HepG2 (cell line): ENCODE measurements at regions of chr6 and their contacts with region 1.

Region 1: GRCh38 chr6:106300944-106301343 is 24.6 kb downstream of the ATG5 start:
- DNase-seq: peak; percentile 14
- ATAC-seq: peak; percentile 47; the same call in 2 of the 3 replicates
- H3K4me3 ChIP-seq: no peak overlapping the region
- H3K27ac ChIP-seq: no peak overlapping the region
- H3K4me1 ChIP-seq: peaks cover 12% of the 10 kb centered on the region
- H3K27me3 ChIP-seq: no peaks in the 10 kb centered on the region
- CTCF ChIP-seq: peak; percentile 63
- EP300 ChIP-seq: no peak
- POLR2A ChIP-seq: no peak
- RAD21 ChIP-seq: 0 out of 2 replicates have a peak, but pooled peaks have one; percentile 14

Region 2: DNA sequence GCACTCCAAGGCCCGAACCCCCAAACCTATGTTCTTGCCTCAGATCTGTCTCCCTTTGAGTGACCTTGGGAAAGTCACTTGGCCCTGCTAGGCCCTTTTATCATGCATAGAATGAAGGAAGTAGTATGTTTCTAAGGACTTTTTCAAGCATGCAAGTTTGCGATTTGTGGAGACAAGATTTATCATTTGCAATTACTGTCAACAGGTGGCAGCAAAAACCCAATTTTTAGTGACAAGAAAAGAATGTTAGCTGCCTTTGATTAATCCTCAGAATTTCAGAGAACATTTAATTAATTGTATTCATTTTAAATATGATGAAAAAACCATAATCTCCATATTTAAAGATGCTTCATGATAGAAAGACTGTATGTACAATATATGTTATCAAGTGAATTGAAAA is 869.7 kb before region 1 on chr6:
- CTCF ChIA-PET with region 1: no interaction called
- POLR2A ChIA-PET with region 1: no interaction called
- in situ Hi-C with region 1: no loop called
- intact Hi-C with region 1: loop called (anchors 5 kb)
- DNase-seq: peak; percentile 40
- ATAC-seq: no peak
- H3K4me3 ChIP-seq: peak overlapping the region in 2 of 3 experiments; percentile 48 to 50; a peak in 2 of 6 replicates
- H3K27ac ChIP-seq: no peak overlapping the region
- H3K4me1 ChIP-seq: peaks cover 39% of the 10 kb centered on the region
- H3K27me3 ChIP-seq: no peaks in the 10 kb centered on the region
- CTCF ChIP-seq: peak; percentile 63
- EP300 ChIP-seq: no peak
- POLR2A ChIP-seq: no peak
- RAD21 ChIP-seq: no peak

Region 3: GRCh38 chr6:105484238-105485161 is 816.4 kb before region 1 on chr6:
- CTCF ChIA-PET with region 1: interaction called, 3 read pairs
- POLR2A ChIA-PET with region 1: no interaction called
- in situ Hi-C with region 1: loop called (anchors 10 kb)
- intact Hi-C with region 1: loop called (anchors 1 kb)
- DNase-seq: peak; percentile 41
- ATAC-seq: peak; percentile 64
- H3K4me3 ChIP-seq: no peak overlapping the region
- H3K27ac ChIP-seq: no peak overlapping the region
- H3K4me1 ChIP-seq: no peaks in the 10 kb centered on the region
- H3K27me3 ChIP-seq: no peaks in the 10 kb centered on the region
- CTCF ChIP-seq: peak; percentile 60
- EP300 ChIP-seq: no peak
- POLR2A ChIP-seq: no peak
- RAD21 ChIP-seq: peak; percentile 25; the same call in 1 of the 2 replicates

Region 4: GRCh38 chr6:105733565-105734162 is 567.3 kb before region 1 on chr6:
- CTCF ChIA-PET with region 1: interaction called, 10 read pairs
- POLR2A ChIA-PET with region 1: no interaction called
- in situ Hi-C with region 1: loop called (anchors 10 kb)
- intact Hi-C with region 1: loop called (anchors 2 kb)
- DNase-seq: peak; percentile 5
- ATAC-seq: no peak
- H3K4me3 ChIP-seq: no peak overlapping the region
- H3K27ac ChIP-seq: no peak overlapping the region
- H3K4me1 ChIP-seq: no peaks in the 10 kb centered on the region
- H3K27me3 ChIP-seq: no peaks in the 10 kb centered on the region
- CTCF ChIP-seq: peak; percentile 39
- EP300 ChIP-seq: no peak
- POLR2A ChIP-seq: no peak
- RAD21 ChIP-seq: no peak

Region 5: DNA sequence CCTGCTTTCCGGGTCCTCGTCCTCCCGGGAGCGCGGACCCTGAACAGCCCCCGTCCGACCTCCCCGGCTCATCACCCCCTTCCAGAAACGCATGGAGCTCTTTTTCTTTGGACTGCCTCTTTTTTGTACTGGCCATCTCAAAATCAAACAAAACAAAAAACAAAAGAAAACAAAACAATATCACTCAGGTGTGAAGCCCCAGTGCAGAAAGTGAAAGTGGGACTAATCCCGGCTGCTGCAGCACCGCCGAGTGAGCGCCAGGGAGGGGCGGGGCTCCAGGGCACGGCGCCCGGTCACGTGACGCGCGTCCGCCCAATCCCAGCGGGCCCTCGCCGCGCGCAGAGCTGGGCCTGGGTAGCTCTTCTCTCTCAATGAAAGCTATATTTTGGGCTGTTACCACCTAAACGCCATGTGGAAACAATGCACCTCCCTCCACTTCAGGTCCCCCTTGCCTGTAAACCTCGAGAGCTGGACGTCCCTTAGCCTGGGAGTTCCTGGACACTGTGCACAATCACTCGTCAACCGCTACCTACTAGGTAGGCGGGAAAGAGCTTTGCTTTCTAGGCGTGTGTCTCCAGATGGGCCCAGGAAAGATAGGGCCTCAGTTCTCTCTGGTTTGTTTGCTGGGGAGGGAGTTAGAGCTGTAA is 308.5 kb before region 1 on chr6:
- CTCF ChIA-PET with region 1: no interaction called
- POLR2A ChIA-PET with region 1: no interaction called
- in situ Hi-C with region 1: no loop called
- intact Hi-C with region 1: loop called (anchors 10 kb)
- DNase-seq: peak; percentile 39
- ATAC-seq: peak; percentile 98
- H3K4me3 ChIP-seq: peak overlapping the region; percentile 61 to 71 (median 69)
- H3K27ac ChIP-seq: no peak overlapping the region
- H3K4me1 ChIP-seq: peaks cover 15% of the 10 kb centered on the region
- H3K27me3 ChIP-seq: peaks cover 0 to 4% of the 10 kb centered on the region in 2 experiments; a peak in 3 of 5 replicates
- CTCF ChIP-seq: no peak
- EP300 ChIP-seq: no peak
- POLR2A ChIP-seq: no peak
- RAD21 ChIP-seq: no peak

Region 6: DNA sequence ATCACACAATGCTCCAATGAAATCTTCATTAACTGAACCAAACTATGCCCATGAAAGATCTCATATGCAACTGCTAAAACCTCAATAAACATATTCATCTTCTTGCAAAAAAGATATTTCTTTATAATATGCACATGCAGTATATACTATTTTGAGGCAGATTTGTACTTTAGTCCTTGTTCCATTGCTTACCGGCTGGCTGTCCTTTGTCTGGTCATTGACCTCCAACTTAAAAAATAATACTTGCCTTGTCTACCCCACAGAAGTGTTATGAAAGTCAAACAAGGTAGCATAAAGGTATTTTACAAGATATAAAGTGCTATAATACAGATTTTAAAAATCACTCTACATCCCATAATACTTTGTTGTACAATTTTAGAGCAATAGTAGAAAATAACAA is 63.7 kb before region 1 on chr6:
- CTCF ChIA-PET with region 1: no interaction called
- POLR2A ChIA-PET with region 1: no interaction called
- in situ Hi-C with region 1: no loop called
- intact Hi-C with region 1: loop called (anchors 5 kb)
- DNase-seq: peak; percentile 23
- ATAC-seq: no peak
- H3K4me3 ChIP-seq: no peak overlapping the region
- H3K27ac ChIP-seq: no peak overlapping the region
- H3K4me1 ChIP-seq: peaks cover 11% of the 10 kb centered on the region
- H3K27me3 ChIP-seq: no peaks in the 10 kb centered on the region
- CTCF ChIP-seq: no peak
- EP300 ChIP-seq: no peak
- POLR2A ChIP-seq: no peak
- RAD21 ChIP-seq: no peak

Region 7: GRCh38 chr6:106287205-106287604 is 13.7 kb before region 1 on chr6:
- CTCF ChIA-PET with region 1: no interaction called
- POLR2A ChIA-PET with region 1: no interaction called
- in situ Hi-C with region 1: no loop called
- intact Hi-C with region 1: no loop called
- DNase-seq: no peak
- ATAC-seq: no peak
- H3K4me3 ChIP-seq: no peak overlapping the region
- H3K27ac ChIP-seq: no peak overlapping the region
- H3K4me1 ChIP-seq: no peaks in the 10 kb centered on the region
- H3K27me3 ChIP-seq: no peaks in the 10 kb centered on the region
- CTCF ChIP-seq: no peak
- EP300 ChIP-seq: no peak
- POLR2A ChIP-seq: no peak
- RAD21 ChIP-seq: no peak

Region 8: DNA sequence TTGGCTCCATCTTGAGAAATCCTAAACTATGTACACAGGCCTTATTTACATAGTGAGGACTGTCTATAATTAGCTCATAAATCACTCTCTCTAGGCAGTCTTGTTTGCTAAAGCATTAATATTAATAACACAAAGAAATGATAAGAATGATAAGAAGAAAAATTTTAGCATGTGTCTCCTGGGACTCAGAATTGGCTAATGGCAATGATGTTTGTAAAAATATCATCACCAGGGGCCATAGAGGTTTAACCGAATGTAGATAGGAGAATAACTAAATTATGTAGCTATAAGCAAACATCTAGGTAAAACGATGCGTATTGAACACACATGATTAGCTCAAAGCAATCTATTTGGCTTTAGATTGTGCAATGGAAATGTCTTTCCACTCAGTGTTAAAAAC is 46.4 kb after region 1 on chr6:
- CTCF ChIA-PET with region 1: no interaction called
- POLR2A ChIA-PET with region 1: no interaction called
- in situ Hi-C with region 1: no loop called
- intact Hi-C with region 1: no loop called
- DNase-seq: no peak
- ATAC-seq: no peak
- H3K4me3 ChIP-seq: no peak overlapping the region
- H3K27ac ChIP-seq: no peak overlapping the region
- H3K4me1 ChIP-seq: no peaks in the 10 kb centered on the region
- H3K27me3 ChIP-seq: peaks cover 0 to 9% of the 10 kb centered on the region in 2 experiments; a peak in 2 of 5 replicates
- CTCF ChIP-seq: no peak
- EP300 ChIP-seq: no peak
- POLR2A ChIP-seq: no peak
- RAD21 ChIP-seq: no peak